Activated CD4-positive, alpha-beta memory T cell treated with anti-CD3 and anti-CD28 coated beads for 36 hours (primary cell): ENCODE measurements at regions of chr5 and their contacts with region 1.

Region 1: DNA sequence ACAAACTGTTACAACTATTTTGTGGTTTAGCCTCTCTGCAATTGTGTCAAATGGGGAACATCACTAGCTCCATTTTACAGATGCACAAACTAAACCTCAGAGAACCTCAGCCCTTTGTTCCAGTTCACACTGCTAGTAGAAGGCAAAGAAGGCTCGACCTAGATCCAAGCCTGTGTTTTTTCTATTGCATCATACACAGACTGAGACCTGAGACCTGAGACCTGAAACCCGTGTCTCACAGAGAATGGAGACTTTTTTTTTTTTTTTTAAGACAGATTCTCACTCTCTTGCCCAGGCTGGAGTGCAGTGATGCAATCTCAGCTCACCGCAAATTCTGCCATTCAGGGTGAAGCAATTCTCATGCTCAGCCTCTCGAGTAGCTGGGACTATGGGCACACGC is 120.8 kb downstream of the GALNT10 start:
- DNase-seq: peak; percentile 70
- H3K4me3 Mint-ChIP-seq: no peak overlapping the region
- H3K27ac Mint-ChIP-seq: peak overlapping the region; percentile 20
- H3K4me1 Mint-ChIP-seq: peaks cover 30% of the 10 kb centered on the region
- H3K27me3 Mint-ChIP-seq: no peaks in the 10 kb centered on the region

Region 2: DNA sequence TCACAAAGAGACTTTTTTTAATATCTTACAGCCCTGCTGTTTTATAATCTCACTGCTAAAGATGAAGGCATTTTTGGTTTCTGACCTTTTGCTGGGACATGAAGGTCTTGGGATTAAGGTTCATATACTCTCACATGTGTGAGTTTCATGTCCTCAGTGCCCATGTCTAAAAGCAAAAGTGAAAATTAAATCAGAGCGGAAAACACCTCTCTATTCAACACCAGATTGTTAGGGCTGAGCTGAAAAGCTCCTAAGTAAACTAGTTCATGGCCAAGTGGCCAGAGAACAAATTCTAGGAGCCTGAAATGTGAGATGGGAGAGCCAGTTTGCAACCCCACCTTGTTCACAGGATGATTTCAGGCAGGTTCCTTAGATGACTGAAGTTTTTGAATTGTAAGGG is 710.0 kb before region 1 on chr5:
- CTCF ChIA-PET with region 1: no interaction called
- POLR2A ChIA-PET with region 1: no interaction called
- intact Hi-C with region 1: no loop called
- DNase-seq: no peak
- H3K4me3 Mint-ChIP-seq: no peak overlapping the region
- H3K27ac Mint-ChIP-seq: no peak overlapping the region
- H3K4me1 Mint-ChIP-seq: no peaks in the 10 kb centered on the region
- H3K27me3 Mint-ChIP-seq: no peaks in the 10 kb centered on the region

Region 3: DNA sequence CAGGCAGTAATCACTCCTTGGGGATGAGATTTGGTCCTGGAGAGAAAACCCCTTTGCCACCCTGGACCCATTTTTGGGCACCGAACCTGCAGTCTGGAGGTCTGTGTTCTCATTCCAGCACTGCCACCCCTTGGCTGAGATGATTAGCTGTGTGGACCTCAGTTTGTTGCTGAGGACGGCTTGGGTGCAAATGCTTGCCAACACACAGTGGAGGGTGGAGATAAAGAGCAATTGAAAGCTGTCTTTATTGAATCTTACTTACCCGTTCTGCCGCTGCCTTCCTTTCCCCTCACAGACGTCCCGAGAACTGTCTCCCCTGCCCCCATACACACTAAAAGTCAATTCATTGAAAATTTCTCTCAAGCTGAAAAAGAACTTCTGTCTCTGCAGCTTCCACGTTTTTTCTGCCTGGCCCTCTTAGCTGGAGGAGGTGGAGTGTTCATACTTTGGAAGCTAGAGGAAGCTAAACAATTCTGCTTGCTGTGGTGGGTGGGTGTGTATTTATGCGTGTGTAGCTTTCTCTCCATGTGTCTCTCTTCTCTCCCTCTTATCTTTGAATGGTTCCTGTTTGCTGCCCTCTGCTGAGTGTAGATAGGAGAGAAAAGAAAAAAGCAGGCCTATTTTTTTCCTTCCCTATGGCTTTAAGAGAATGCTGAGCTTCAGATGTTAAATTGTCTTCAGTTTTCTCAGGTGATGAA is 114.3 kb before region 1 on chr5:
- CTCF ChIA-PET with region 1: no interaction called
- POLR2A ChIA-PET with region 1: no interaction called
- intact Hi-C with region 1: loop called (anchors 5 kb)
- DNase-seq: no peak
- H3K4me3 Mint-ChIP-seq: no peak overlapping the region
- H3K27ac Mint-ChIP-seq: peak overlapping the region; percentile 65
- H3K4me1 Mint-ChIP-seq: peaks cover 71% of the 10 kb centered on the region
- H3K27me3 Mint-ChIP-seq: no peaks in the 10 kb centered on the region

Region 4: DNA sequence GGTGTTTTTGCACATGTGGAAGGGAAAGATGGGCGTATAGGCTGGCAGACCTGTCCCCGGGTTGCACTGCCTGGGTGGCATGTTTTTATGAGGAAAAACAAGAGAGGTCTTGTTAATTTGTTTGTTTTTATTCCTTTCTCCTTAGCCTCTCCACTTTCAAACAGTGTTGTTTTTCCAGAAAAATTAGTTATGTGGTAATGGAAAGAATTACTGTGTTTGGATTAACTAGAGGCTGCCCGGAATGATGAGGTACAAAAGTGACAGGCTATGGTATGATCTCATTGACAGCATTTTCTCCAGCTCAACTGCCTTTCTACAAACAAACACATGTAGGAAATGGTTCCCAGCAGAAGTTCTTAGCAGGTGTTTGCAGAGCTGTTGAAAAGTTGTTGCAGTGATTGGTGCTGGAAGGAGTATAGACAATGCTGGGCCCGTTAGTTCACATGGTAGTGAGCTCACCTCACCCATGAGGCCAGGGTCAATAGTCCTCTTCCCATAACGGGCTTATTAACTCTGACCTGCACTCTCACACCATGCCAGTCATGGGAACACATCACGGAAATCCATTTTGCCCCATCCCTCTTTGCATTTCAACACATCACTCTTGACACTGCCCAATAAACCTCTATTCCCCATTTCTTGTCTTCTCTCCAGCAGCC is 23.2 kb after region 1 on chr5:
- CTCF ChIA-PET with region 1: no interaction called
- POLR2A ChIA-PET with region 1: no interaction called
- intact Hi-C with region 1: no loop called
- DNase-seq: no peak
- H3K4me3 Mint-ChIP-seq: no peak overlapping the region
- H3K27ac Mint-ChIP-seq: no peak overlapping the region
- H3K4me1 Mint-ChIP-seq: no peaks in the 10 kb centered on the region
- H3K27me3 Mint-ChIP-seq: no peaks in the 10 kb centered on the region

Region 5: GRCh38 chr5:154430466-154430865 is 119.1 kb after region 1 on chr5:
- CTCF ChIA-PET with region 1: no interaction called
- POLR2A ChIA-PET with region 1: no interaction called
- intact Hi-C with region 1: no loop called
- DNase-seq: no peak
- H3K4me3 Mint-ChIP-seq: no peak overlapping the region
- H3K27ac Mint-ChIP-seq: no peak overlapping the region
- H3K4me1 Mint-ChIP-seq: no peaks in the 10 kb centered on the region
- H3K27me3 Mint-ChIP-seq: no peaks in the 10 kb centered on the region

Region 6: DNA sequence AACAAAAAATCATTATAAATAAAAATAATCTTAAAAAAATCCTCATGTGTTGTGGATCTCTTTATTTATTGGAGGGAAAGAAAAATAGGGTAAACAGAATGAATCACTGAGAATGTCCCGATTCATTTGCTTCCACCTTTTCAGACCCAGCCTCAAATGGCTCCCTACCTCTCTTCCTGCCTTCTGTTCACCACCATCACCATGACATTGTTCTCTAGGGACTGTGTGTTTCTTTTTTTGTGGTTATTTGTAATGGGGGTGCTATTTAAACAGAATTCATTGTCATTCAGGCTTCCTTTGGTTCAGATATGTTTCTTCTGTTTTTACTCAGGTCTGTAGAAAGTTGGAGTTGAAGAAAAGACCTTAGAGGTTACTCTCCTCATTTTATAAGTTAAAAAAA is 900.4 kb after region 1 on chr5:
- CTCF ChIA-PET with region 1: no interaction called
- POLR2A ChIA-PET with region 1: no interaction called
- intact Hi-C with region 1: no loop called
- DNase-seq: no peak
- H3K4me3 Mint-ChIP-seq: no peak overlapping the region
- H3K27ac Mint-ChIP-seq: no peak overlapping the region
- H3K4me1 Mint-ChIP-seq: no peaks in the 10 kb centered on the region
- H3K27me3 Mint-ChIP-seq: no peaks in the 10 kb centered on the region